Activated CD4-positive, alpha-beta memory T cell treated with anti-CD3 and anti-CD28 coated beads, Interleukin-2, amount 10 ng/mL, durations not matched to agents 7 days and 5 days (primary cell): ENCODE measurements at regions of chr4 and their contacts with region 1.

Region 1: DNA sequence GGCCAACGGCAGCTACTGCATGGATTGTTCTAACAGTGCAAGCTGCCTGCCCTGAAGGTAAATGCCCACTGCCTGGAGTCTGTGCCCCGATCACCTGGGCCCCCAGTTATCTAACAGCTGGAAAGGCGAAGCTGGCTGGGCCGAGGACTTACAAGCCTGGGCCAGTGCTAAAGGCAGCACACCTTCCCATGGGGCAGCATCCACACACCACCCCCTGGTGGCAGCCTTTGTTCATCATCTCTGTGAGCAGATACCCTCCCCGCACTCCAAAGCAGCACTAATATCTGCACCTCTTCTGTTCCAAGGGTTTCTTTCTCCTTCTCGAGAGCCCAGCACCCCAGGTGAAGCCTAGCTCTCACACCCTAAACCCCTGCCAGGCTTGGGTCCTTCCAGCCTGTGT is 7.6 kb downstream of the SLC2A9 start:
- DNase-seq: peak; percentile 66
- H3K4me3 Mint-ChIP-seq: no peak overlapping the region
- H3K27ac Mint-ChIP-seq: no peak overlapping the region
- H3K4me1 Mint-ChIP-seq: peaks cover 25% of the 10 kb centered on the region
- H3K27me3 Mint-ChIP-seq: no peaks in the 10 kb centered on the region

Region 2: DNA sequence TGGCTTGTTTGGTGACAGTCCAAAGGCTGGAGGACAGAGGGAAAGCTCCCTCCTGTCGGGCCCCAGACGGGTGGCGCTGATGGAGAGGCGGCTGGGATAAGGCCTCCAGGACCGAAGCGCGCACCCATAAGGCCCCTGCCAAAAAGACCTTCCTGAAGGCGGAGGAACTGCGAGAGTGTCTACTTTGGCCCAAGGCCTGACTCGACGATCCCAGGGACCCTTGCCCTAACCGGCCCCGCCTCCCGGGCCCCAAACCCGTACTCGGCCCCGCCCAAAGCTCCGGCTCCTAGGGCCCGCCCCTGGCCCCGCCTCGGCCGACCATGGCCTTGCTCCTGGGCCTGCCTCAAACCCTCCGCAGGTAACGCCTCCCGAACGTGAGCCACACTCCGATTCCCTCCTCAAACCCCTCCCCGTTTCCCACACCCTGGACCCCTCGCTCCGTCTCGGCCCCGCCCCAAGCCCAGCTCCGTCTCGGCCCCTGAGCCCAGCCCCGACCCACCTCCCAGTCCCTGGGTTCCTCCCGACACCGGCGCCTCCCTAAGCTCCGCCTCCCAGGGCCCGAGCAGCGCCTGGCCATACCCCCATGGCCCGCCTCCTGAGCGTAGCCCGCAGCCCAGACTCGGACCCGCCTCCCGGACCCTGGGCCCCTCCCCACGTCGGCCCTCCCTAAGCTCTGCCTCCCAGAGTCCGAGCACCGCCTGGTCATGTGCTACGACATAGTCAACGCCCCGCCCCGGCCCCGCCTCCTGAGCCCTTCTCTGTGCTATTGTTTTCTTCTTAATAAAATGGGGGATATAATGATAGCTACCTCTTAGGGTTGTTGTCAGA is 322.3 kb before region 1 on chr4:
- CTCF ChIA-PET with region 1: interaction called, 17 read pairs
- POLR2A ChIA-PET with region 1: interaction called, 3 read pairs
- DNase-seq: peak; percentile 92
- H3K4me3 Mint-ChIP-seq: peak overlapping the region; percentile 75
- H3K27ac Mint-ChIP-seq: peak overlapping the region; percentile 67
- H3K4me1 Mint-ChIP-seq: peaks cover 17% of the 10 kb centered on the region
- H3K27me3 Mint-ChIP-seq: peaks cover 7% of the 10 kb centered on the region

Region 3: GRCh38 chr4:9762823-9763475 is 250.8 kb before region 1 on chr4:
- CTCF ChIA-PET with region 1: interaction called, 136 read pairs
- POLR2A ChIA-PET with region 1: interaction called, 6 read pairs
- DNase-seq: peak; percentile 50
- H3K4me3 Mint-ChIP-seq: no peak overlapping the region
- H3K27ac Mint-ChIP-seq: no peak overlapping the region
- H3K4me1 Mint-ChIP-seq: no peaks in the 10 kb centered on the region
- H3K27me3 Mint-ChIP-seq: peaks cover 15% of the 10 kb centered on the region

Region 4: DNA sequence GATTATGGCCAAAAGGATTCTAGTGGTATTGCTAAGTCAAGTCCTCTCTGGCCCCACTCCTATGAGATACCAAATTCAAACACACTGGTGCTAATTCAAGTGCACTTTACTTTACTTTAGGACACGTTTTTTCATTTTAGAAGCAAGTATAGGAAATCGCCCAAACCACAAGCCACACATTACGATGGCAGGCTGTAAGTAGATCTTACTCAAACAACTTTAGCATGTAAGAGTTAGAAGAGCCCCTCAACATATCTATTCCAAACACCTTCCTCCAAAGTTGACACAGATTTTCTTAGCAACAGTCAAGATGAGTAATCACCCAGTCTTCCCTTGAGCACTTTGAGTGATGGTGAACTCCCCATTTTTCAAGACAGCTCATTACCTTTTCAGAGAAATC is 188.7 kb before region 1 on chr4:
- CTCF ChIA-PET with region 1: interaction called, 12 read pairs
- POLR2A ChIA-PET with region 1: no interaction called
- DNase-seq: peak; percentile 61
- H3K4me3 Mint-ChIP-seq: no peak overlapping the region
- H3K27ac Mint-ChIP-seq: peak overlapping the region; percentile 32
- H3K4me1 Mint-ChIP-seq: peaks cover 26% of the 10 kb centered on the region
- H3K27me3 Mint-ChIP-seq: peaks cover 48% of the 10 kb centered on the region

Region 5: GRCh38 chr4:9994246-9994847 is 19.4 kb before region 1 on chr4:
- CTCF ChIA-PET with region 1: interaction called, 20 read pairs
- POLR2A ChIA-PET with region 1: interaction called, 4 read pairs
- DNase-seq: no peak
- H3K4me3 Mint-ChIP-seq: no peak overlapping the region
- H3K27ac Mint-ChIP-seq: peak overlapping the region; percentile 66
- H3K4me1 Mint-ChIP-seq: peaks cover 55% of the 10 kb centered on the region
- H3K27me3 Mint-ChIP-seq: no peaks in the 10 kb centered on the region

Region 6: DNA sequence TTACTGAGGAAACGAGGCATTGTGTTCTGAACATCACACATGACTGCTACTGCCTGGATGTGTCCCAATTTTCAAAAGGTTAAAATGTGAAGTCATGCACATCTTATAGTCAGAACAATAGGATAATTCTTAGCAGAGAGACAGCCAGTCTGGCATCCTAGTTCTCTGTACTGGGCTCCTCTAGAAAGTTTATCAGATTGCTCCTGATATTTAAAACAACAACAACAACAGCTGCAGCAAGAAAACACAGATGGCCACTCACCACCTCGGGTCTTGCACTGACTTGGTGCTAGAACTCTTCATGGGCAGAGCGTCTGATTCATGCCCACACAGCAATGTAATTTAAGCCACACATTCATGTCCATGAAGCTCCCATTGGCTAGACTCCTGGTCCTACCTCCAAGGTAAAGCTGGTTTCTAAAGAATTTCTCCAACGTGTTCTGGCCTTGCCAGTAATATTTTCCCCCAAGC is 40.9 kb after region 1 on chr4:
- CTCF ChIA-PET with region 1: no interaction called
- POLR2A ChIA-PET with region 1: no interaction called
- DNase-seq: no peak
- H3K4me3 Mint-ChIP-seq: no peak overlapping the region
- H3K27ac Mint-ChIP-seq: no peak overlapping the region
- H3K4me1 Mint-ChIP-seq: no peaks in the 10 kb centered on the region
- H3K27me3 Mint-ChIP-seq: no peaks in the 10 kb centered on the region

Region 7: DNA sequence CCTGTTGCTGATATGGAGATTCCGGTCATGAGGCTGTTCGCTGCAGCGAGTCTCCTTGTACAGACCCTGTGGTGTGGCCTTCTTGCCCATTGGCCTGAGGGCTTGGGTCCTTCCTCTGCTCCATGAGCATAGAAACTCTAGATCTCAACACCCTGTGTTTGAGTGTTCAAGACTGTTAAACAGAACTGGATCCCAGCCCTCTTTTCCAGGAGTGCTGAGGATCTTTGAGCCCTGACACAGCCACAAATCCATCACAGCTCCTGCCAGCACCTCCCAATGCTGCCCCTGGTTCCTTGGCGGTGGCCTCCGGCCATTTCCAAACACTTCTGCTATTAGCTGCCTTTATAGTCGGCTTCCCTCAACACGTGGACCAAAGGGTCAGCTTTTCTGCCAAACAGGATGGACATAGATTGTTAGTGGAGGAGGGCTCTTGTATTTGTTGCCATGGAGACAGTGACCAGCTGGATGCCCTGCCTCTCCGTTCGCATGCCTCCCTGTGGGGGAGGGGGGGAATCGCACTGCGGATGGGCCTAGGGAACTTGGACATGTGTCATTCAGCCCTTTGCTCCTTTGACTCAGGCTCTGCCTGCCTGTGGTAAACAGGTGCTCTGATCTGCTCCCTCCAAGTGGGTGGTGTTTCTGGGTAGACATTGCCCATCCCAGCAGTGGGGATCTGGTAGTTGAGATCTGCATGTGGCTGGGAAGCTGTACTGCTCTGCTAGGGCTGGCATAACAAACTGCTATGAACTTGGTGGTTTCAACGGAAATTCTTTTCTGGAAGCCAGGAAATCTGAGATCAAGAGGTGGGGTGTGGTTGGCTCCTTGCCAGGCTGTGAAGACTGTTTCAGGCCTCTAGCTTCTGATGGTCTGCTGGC is 109.7 kb after region 1 on chr4:
- CTCF ChIA-PET with region 1: no interaction called
- POLR2A ChIA-PET with region 1: no interaction called
- DNase-seq: no peak
- H3K4me3 Mint-ChIP-seq: no peak overlapping the region
- H3K27ac Mint-ChIP-seq: peak overlapping the region; percentile 18
- H3K4me1 Mint-ChIP-seq: peaks cover 17% of the 10 kb centered on the region
- H3K27me3 Mint-ChIP-seq: no peaks in the 10 kb centered on the region